Left colon (tissue), 2 donors: ENCODE measurements at regions of chr12 and their contacts with region 1.

Region 1: DNA sequence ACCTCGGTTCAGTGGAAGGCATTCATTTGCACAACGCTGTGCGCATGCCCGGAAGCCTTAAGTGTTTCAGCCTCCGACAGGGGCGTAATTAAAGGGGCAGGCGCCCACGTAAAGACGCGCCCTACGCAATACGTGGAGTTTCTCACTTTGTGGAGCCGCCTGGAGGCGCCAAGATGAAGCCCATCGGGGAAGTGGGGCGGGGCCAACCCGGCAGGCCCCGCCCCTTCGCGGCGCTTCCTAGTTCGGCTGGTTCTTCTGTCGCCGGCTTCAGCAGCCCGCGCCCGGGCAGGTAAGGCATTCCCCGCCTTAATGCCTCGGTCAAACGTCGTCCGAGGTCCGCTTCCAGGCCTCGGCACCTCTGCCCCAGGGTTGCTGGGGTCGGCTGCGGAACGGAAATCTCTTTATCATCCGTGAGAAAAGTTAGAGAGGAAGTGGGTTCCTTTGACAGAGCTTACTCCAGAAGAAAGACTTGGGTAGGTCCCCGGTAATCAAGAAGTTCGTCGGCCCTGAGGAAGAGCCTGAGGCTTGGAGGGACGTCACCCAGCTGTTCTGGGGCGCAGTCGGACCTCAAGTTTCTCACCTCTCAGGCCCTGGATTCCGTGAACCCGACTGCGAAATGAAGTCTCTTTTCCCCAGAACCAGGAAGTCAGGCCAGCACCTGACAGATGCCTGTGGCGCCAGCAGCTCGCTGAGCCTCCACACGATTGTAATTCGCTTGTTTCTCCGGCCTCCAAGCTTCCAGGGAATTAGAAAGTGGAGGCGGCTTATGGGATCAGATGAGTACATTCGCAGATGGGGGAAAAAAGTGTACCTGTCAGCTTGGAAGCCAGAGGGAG is at the starts of genes IRAK4 and PUS7L:
- DNase-seq: peak; percentile 95 to 97
- ATAC-seq: peak; percentile 97
- total RNA-seq, gene IRAK4: 17.3 to 19.4 TPM
- total RNA-seq, gene PUS7L: 13.3 to 15.2 TPM

Region 2: DNA sequence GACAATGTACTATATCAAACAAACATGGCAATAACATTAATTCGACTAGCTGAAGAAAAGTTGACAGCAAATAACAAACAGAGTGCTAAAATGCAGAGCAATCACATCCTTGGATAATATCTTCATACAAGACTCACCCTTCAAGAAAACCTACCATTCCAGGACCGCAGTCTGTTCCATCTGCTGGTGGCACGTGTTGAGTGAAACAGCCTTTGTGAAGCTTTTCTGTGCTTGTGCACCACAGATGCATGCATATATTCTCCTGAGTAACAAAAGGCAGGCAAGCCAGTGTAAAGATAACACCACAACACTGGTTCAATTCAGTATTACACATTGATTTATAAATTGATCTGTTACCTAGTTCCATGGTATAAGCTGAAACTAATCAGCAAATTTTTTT is 296.2 kb before region 1 on chr12:
- intact Hi-C with region 1: no loop called
- DNase-seq: no peak
- ATAC-seq: no peak

Region 3: DNA sequence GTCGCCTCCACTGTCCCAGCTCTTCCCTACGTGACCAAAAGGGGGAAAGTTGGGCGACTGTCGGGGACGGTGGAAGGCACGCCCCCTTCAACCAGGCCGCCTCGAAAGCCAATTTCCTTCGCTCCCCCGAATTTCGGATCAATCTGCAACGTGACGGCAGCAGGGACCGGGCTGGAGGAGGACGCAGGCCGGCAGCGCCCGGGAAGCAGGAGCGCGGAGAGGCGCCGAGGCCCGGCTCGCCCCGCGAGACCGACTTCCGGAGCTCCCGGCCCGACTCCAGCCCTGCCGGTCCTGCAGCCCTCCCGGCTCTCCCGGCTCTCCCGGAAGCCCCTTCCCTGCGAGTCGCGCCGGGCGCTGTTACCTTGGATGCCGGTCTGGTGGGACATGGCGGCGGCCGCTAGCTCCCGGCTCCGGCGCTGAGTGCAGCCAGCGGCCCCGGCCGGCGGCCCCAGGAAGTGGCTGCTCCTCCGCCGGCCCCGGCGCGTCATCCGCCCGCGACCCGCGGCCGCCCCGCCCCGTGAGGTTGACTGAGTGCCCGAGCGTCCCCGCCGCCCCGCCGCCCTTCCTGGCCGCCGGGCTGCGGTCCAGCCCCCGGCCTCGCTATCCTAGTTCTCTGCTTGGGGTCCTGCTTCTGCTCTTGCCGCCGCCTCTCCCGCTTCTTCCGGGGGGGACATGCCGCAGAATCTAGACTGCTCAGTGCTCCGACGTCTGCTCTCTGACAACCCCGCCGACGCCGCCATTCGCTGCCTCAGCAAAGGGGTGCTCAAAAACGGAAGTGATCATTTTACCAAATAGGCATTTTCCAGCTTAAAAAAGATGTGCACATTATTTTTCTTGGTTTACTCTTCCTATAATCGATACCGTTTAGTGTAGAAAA is 47.2 kb after region 1 on chr12 and contains the start of gene TWF1:
- intact Hi-C with region 1: loop called in 1 of 2 experiments (anchors 10 kb)
- DNase-seq: peak; percentile 79 to 90
- ATAC-seq: peak; percentile 99
- total RNA-seq, gene TWF1: 110 to 131 TPM

Region 4: DNA sequence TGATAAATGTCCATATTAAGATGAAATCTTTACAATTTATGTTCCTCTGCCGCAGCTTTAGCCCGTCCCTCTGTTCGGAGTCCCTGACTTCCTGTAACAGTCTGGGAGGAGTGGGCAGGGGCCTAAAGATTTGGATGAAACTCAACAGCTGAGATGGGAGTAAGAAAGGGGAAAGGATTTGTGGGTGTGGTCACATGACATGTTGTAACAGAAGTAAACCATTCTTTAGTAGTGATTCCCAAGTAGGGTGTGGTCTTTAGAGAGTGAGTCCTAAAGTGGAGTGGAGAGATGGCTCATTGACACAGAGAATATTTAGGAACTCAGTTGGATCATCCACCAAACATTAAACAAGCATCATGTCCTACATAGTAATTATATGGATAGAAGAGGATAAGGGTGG is 89.8 kb after region 1 on chr12:
- intact Hi-C with region 1: no loop called
- DNase-seq: no peak
- ATAC-seq: no peak

Region 5: DNA sequence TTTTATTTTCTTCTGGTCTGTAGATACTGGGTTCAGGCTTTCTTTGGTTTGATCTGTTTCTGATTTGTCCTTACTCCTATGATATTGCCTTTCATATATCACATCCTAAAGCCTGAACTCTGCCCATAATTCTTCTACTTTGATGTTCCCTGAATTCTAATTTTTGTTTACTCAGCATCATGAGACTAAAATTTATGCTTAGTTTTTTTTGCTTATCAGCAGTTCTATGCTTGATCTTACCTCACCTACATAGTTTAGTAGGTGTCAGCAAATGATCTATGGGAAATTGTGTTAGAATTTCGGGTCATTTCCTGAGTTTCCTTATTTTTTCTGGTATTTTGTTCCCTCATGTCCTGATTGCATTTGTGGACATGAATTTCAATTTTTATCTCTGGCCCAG is 171.1 kb after region 1 on chr12:
- intact Hi-C with region 1: no loop called
- DNase-seq: no peak
- ATAC-seq: no peak